ENCODE measurements at regions of chr14 and their contacts with region 1.

Region 1: DNA sequence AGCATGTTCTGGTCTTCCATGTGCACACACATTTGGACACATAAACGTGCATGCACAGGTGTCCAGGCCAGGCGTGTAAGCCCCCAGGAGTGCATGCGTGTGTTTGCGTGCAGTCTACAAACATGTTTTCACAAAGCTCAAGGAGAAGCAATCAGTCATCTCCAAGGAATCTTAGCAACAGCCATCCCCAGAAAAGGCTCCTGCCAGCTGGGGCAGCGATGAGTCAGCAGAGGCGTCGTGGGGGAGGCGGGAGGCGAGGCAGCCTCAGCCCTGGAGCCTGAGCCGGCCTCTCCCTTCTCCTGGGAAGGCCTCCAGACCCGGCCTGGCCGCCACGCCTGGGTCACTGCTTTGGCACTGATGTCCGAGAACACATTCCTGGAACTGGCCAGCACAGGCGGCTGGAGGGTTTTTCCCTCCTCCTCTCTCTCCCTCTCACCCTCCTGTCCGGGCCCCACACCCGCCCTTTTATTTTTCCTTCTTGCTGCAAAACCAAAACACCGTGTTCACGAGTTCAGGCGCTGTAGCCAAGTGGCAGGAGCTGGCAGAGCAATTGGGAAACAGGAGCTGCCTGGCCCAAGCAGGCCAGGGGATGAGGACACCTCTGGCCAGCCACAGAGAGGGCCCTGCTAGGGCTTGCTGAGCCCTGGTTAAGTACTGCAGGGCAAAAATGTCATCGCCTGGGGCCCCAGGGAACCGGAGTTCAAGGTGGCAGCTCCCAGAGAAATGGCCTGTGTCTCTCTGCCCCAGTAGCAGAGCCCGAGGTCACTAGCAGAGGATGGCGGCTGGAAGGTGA is 92.7 kb downstream of the LRRC74A start:
- DNase-seq: peak; percentile 95 to 96
- ATAC-seq: peak; percentile 80 to 85
- H3K4me3 ChIP-seq: no peak overlapping the region
- H3K27ac ChIP-seq: peak overlapping the region; percentile 96 to 99
- H3K4me1 ChIP-seq: peaks cover 82% of the 10 kb centered on the region
- CTCF ChIP-seq: no peak
- EP300 ChIP-seq: peak; percentile 66 to 79; a peak in 3 of 5 replicates
- POLR2A ChIP-seq: no peak
- RAD21 ChIP-seq: peak; percentile 3 to 44; a peak in 2 of 5 replicates

Region 2: DNA sequence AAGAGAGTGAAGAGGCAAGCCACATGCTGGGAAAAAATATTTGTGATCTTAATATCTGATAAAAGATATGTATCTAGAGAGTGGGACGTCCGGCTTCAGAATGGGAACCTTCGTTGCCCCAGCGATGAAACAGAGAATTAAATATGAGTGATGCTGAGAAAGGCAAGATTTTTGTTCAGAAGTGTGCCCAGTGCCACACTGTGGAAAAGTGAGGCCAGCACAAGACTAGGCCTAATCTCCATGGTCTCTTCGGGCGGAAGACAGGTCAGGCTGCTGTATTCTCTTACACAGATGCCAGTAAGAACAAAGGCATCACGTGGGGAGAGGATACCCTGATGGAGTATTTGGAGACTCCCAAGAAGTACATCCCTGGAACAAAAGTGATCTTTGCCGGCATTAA is 285.4 kb before region 1 on chr14:
- CTCF ChIA-PET with region 1: no interaction called
- POLR2A ChIA-PET with region 1: no interaction called
- DNase-seq: no peak
- ATAC-seq: no peak
- H3K4me3 ChIP-seq: no peak overlapping the region
- H3K27ac ChIP-seq: no peak overlapping the region
- H3K4me1 ChIP-seq: no peaks in the 10 kb centered on the region
- CTCF ChIP-seq: no peak
- EP300 ChIP-seq: no peak
- POLR2A ChIP-seq: no peak
- RAD21 ChIP-seq: no peak

Region 3: DNA sequence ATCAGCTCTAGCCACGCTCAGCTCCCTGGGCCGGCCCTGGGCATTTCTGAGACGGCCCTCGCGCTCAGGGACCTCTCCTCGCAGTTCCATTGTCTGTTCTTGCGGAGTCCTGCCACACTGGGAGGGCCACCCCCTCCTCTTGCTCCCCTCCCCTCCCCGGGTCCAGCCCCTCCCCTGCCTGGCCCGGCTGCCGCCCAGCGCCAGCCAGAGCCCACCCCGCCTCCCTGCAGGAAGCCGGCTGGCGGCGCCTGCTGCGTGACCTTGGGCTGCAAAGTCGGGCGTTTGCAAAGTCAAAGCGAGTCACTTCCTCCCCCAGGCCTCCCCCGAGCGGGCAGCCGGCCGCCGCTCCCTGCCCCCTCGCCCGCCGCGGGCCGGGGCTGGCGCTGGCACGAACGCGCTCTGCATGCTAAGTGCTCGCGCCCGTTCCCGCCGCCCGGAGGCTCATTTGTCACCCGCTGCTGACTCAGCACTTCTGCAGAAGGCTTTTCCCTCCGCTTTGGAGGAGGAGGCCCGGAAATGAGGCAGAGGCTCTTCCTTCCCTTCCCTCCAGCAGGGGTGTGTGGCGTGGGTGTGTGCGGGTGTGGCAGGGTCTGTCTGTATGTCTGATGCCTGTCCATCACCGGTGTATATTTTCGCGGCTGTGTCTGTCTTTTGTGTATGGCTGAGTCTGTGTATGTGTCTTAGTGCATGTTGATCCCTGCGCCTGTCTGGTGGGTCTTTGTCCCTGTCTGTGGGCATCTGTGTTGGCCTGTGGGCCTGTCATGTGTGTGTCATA is 37.6 kb after region 1 on chr14:
- CTCF ChIA-PET with region 1: interaction called, 678 read pairs
- POLR2A ChIA-PET with region 1: interaction called, 63 read pairs
- DNase-seq: peak; percentile 66 to 97
- ATAC-seq: peak; percentile 65 to 66
- H3K4me3 ChIP-seq: peak overlapping the region; percentile 30
- H3K27ac ChIP-seq: peak overlapping the region; percentile 96 to 100
- H3K4me1 ChIP-seq: peaks cover 91% of the 10 kb centered on the region
- CTCF ChIP-seq: no peak
- EP300 ChIP-seq: peak; percentile 85 to 95; a peak in 4 of 5 replicates
- POLR2A ChIP-seq: peak; percentile 29
- RAD21 ChIP-seq: peak; percentile 34 to 73; a peak in 4 of 5 replicates

Region 4: GRCh38 chr14:77014004-77014604 is 95.2 kb after region 1 on chr14:
- CTCF ChIA-PET with region 1: interaction called, 44 read pairs
- POLR2A ChIA-PET with region 1: no interaction called
- DNase-seq: no peak
- ATAC-seq: no peak
- H3K4me3 ChIP-seq: no peak overlapping the region
- H3K27ac ChIP-seq: peak overlapping the region in 1 of 2 experiments; percentile 49; a peak in 2 of 6 replicates
- H3K4me1 ChIP-seq: no peaks in the 10 kb centered on the region
- CTCF ChIP-seq: no peak
- EP300 ChIP-seq: no peak
- POLR2A ChIP-seq: no peak
- RAD21 ChIP-seq: no peak

Region 5: DNA sequence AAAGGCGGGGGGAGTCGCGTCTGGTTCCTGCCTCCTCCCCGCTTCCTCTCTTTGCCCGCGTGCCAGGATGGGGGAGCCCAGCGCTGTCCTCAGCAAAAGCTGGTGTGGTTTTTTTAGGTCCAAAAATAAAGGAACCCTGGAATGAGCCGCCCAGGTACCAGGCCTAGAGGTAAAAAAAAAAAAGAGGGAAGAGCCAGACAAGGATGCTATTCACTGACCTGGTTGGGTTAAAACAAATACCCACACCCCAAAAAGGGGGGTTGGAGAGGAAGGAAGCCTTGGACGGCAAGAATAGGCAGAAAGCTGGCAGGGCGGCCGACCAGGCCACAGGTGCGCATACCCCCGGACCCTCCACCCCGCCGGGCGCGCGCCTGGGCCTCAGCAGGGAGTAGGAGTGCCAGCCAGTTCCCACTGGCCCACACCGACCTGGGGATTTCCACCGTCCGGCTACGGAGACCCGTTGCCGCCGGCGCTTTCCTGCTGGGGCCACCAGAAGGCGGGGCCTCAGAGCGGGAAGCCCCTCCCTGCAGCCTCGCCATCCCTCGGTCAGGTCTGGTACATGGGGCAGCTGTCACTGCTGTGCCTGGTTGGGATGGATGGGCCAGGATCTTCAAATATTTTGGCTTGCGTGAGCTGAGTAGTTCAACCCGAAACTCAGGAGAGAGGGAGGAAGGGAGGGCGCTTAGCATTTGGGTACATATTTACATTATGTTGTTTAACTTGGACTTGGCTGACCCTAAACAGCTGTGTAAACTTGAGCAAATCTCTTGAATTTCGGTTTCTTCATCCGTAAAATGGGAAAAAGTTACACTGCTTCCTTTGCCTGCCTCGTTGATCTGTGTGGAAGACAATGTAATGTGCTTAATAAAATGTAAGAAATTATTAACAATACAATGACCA is 114.9 kb after region 1 on chr14:
- CTCF ChIA-PET with region 1: interaction called, 144 read pairs
- POLR2A ChIA-PET with region 1: interaction called, 78 read pairs
- DNase-seq: peak; percentile 92 to 94
- ATAC-seq: peak; percentile 77 to 79
- H3K4me3 ChIP-seq: peak overlapping the region; percentile 49
- H3K27ac ChIP-seq: peak overlapping the region; percentile 95 to 99
- H3K4me1 ChIP-seq: peaks cover 78% of the 10 kb centered on the region
- CTCF ChIP-seq: no peak
- EP300 ChIP-seq: peak; percentile 66 to 75; a peak in 2 of 5 replicates
- POLR2A ChIP-seq: peak; percentile 38
- RAD21 ChIP-seq: peak; percentile 23 to 28; a peak in 2 of 5 replicates

Region 6: GRCh38 chr14:77067632-77068514 is 148.9 kb after region 1 on chr14:
- CTCF ChIA-PET with region 1: interaction called, 676 read pairs
- POLR2A ChIA-PET with region 1: interaction called, 8 read pairs
- DNase-seq: peak; percentile 79 to 87
- ATAC-seq: peak; percentile 87 to 92
- H3K4me3 ChIP-seq: no peak overlapping the region
- H3K27ac ChIP-seq: peak overlapping the region; percentile 73 to 87
- H3K4me1 ChIP-seq: peaks cover 35% of the 10 kb centered on the region
- CTCF ChIP-seq: peak; percentile 96
- EP300 ChIP-seq: 0 out of 5 replicates have a peak, but pooled peaks of 1 of the 2 experiments have one; percentile 26
- POLR2A ChIP-seq: no peak
- RAD21 ChIP-seq: peak; percentile 100